ENCODE measurements at regions of chr3 and their contacts with region 1.

Region 1: GRCh38 chr3:71360764-71361163 is 222.8 kb downstream of the FOXP1 start:
- DNase-seq: peak; percentile 48
- ATAC-seq: peak; percentile 67
- H3K4me3 Mint-ChIP-seq: peak overlapping the region; percentile 50
- H3K27ac Mint-ChIP-seq: peak overlapping the region; percentile 88
- H3K4me1 Mint-ChIP-seq: peaks cover 86% of the 10 kb centered on the region
- H3K27me3 Mint-ChIP-seq: no peaks in the 10 kb centered on the region

Region 2: GRCh38 chr3:71006810-71007785 is 353.7 kb before region 1 on chr3:
- CTCF ChIA-PET with region 1: no interaction called
- POLR2A ChIA-PET with region 1: interaction called, 3 read pairs
- intact Hi-C with region 1: loop called in 1 of 2 experiments (anchors 1 kb)
- DNase-seq: no peak
- ATAC-seq: no peak
- H3K4me3 Mint-ChIP-seq: no peak overlapping the region
- H3K27ac Mint-ChIP-seq: peak overlapping the region; percentile 79
- H3K4me1 Mint-ChIP-seq: peaks cover 79% of the 10 kb centered on the region
- H3K27me3 Mint-ChIP-seq: no peaks in the 10 kb centered on the region

Region 3: GRCh38 chr3:71050538-71051258 is 310.1 kb before region 1 on chr3:
- CTCF ChIA-PET with region 1: no interaction called
- POLR2A ChIA-PET with region 1: no interaction called
- intact Hi-C with region 1: no loop called
- DNase-seq: peak; percentile 65
- ATAC-seq: peak; percentile 87
- H3K4me3 Mint-ChIP-seq: peak overlapping the region; percentile 36
- H3K27ac Mint-ChIP-seq: peak overlapping the region; percentile 92
- H3K4me1 Mint-ChIP-seq: peaks cover 100% of the 10 kb centered on the region
- H3K27me3 Mint-ChIP-seq: no peaks in the 10 kb centered on the region

Region 4: DNA sequence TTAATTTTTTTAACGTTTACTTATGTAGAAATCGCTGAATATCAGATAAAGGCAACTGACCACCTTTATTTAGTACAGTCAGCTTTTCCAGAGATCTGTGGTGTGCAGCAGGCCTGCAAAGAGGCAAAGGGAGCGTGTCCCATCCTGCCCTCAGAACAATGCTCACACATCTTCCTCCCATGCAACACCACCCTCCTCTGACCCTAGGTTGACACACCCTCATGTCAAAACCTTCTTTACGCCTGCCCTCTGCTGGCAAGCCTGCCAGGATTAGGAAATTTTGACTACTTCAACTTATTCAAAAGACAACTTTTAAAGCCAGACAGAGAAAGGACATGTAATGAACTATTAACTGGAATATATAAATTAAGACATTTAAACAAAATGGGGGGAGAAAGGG is 291.0 kb before region 1 on chr3:
- CTCF ChIA-PET with region 1: no interaction called
- POLR2A ChIA-PET with region 1: interaction called, 13 read pairs
- intact Hi-C with region 1: loop called (anchors 1 to 5 kb)
- DNase-seq: peak; percentile 84
- ATAC-seq: peak; percentile 42
- H3K4me3 Mint-ChIP-seq: no peak overlapping the region
- H3K27ac Mint-ChIP-seq: peak overlapping the region; percentile 67
- H3K4me1 Mint-ChIP-seq: peaks cover 85% of the 10 kb centered on the region
- H3K27me3 Mint-ChIP-seq: no peaks in the 10 kb centered on the region

Region 5: GRCh38 chr3:71121429-71122167 is 239.2 kb before region 1 on chr3:
- CTCF ChIA-PET with region 1: no interaction called
- POLR2A ChIA-PET with region 1: interaction called, 3 read pairs
- intact Hi-C with region 1: loop called in 1 of 2 experiments (anchors 1 kb)
- DNase-seq: peak; percentile 52
- ATAC-seq: peak; percentile 57
- H3K4me3 Mint-ChIP-seq: no peak overlapping the region
- H3K27ac Mint-ChIP-seq: peak overlapping the region; percentile 65
- H3K4me1 Mint-ChIP-seq: peaks cover 90% of the 10 kb centered on the region
- H3K27me3 Mint-ChIP-seq: no peaks in the 10 kb centered on the region

Region 6: DNA sequence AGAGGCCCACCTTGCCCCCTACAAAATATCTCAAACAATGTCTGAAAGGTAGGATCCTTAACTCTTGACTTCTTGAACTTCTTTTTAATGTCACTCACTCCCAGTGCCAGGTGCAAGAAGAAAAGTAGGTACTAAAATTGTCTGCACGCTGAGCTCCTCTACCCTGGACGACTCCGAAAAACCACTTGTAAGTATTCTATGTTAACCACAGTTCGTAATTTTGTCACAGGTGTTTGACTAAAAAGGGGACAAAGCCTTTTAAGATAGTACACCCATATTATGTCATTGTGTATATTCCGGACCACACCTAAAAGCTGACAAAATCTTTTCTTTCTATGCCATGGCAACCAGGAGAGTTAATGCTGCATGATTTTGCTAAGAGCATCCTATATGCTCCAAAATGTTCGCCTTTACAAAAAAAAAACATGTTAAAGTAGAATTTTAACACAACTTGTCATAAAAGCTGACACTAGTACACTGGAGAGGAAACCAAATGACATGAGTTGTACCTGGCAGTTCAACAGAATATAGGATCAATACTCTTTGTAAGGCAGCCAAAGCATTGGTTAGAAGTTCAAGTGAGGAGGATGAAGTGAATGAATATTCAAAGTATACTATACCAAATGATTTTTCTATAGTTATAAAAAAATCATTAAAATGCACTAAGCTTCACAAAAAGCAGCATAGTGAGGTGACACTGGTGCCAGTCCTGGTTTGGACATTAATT is 12.3 kb after region 1 on chr3:
- CTCF ChIA-PET with region 1: interaction called, 8 read pairs
- POLR2A ChIA-PET with region 1: no interaction called
- intact Hi-C with region 1: loop called in 1 of 2 experiments (anchors 1 kb)
- DNase-seq: no peak
- ATAC-seq: peak; percentile 84
- H3K4me3 Mint-ChIP-seq: peak overlapping the region; percentile 26
- H3K27ac Mint-ChIP-seq: no peak overlapping the region
- H3K4me1 Mint-ChIP-seq: peaks cover 77% of the 10 kb centered on the region
- H3K27me3 Mint-ChIP-seq: no peaks in the 10 kb centered on the region

Region 7: GRCh38 chr3:71389911-71390573 is 29.3 kb after region 1 on chr3:
- CTCF ChIA-PET with region 1: no interaction called
- POLR2A ChIA-PET with region 1: interaction called, 13 read pairs
- intact Hi-C with region 1: loop called (anchors 1 kb)
- DNase-seq: peak; percentile 52
- ATAC-seq: peak; percentile 18
- H3K4me3 Mint-ChIP-seq: peak overlapping the region; percentile 52
- H3K27ac Mint-ChIP-seq: peak overlapping the region; percentile 69
- H3K4me1 Mint-ChIP-seq: peaks cover 78% of the 10 kb centered on the region
- H3K27me3 Mint-ChIP-seq: no peaks in the 10 kb centered on the region

Region 8: GRCh38 chr3:71495708-71496472 is 135.1 kb after region 1 on chr3:
- CTCF ChIA-PET with region 1: no interaction called
- POLR2A ChIA-PET with region 1: interaction called, 4 read pairs
- intact Hi-C with region 1: loop called in 1 of 2 experiments (anchors 2 kb)
- DNase-seq: peak; percentile 47
- ATAC-seq: peak; percentile 71
- H3K4me3 Mint-ChIP-seq: peak overlapping the region; percentile 56
- H3K27ac Mint-ChIP-seq: peak overlapping the region; percentile 89
- H3K4me1 Mint-ChIP-seq: peaks cover 75% of the 10 kb centered on the region
- H3K27me3 Mint-ChIP-seq: no peaks in the 10 kb centered on the region